Activated CD4-positive, alpha-beta T cell treated with anti-CD3 and anti-CD28 coated beads for 36 hours (primary cell): ENCODE measurements at regions of chr5 and their contacts with region 1.

Region 1: GRCh38 chr5:54969856-54970828 is 15.3 kb downstream of the ESM1 start:
- DNase-seq: no peak
- ATAC-seq: no peak
- H3K4me3 Mint-ChIP-seq: no peak overlapping the region
- H3K27ac Mint-ChIP-seq: no peak overlapping the region
- H3K4me1 Mint-ChIP-seq: no peaks in the 10 kb centered on the region
- H3K27me3 Mint-ChIP-seq: no peaks in the 10 kb centered on the region

Region 2: DNA sequence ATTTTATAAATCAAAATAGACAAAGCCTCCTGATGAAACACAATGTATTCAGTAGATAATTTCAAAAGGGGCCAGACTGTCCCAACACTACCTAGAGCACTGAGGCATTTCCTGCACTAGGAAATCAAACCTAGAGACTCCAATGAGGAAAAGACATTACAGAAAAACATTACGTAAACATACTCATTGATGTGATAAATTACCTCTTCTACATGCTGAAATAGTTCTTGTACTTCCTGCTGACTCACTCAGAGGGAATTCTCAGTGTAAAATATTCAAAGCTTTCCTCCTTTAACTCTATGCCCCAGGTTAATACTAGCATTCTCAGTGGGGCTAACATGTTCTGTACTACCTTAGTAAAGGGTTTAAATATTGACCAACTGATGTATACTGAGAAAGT is 162.7 kb before region 1 on chr5:
- CTCF ChIA-PET with region 1: no interaction called
- POLR2A ChIA-PET with region 1: no interaction called
- intact Hi-C with region 1: no loop called
- DNase-seq: no peak
- ATAC-seq: no peak
- H3K4me3 Mint-ChIP-seq: no peak overlapping the region
- H3K27ac Mint-ChIP-seq: no peak overlapping the region
- H3K4me1 Mint-ChIP-seq: peaks cover 10% of the 10 kb centered on the region
- H3K27me3 Mint-ChIP-seq: peaks cover 2% of the 10 kb centered on the region

Region 3: GRCh38 chr5:54985301-54986268 is 15.4 kb after region 1 on chr5 and contains the start of gene ESM1:
- CTCF ChIA-PET with region 1: interaction called, 4 read pairs
- POLR2A ChIA-PET with region 1: no interaction called
- intact Hi-C with region 1: loop called in 1 of 2 experiments (anchors 1 kb)
- DNase-seq: peak; percentile 9
- ATAC-seq: peak; percentile 60
- H3K4me3 Mint-ChIP-seq: no peak within 1 kb of the TSS
- H3K27ac Mint-ChIP-seq: peak within 1 kb of the TSS; percentile 26
- H3K4me1 Mint-ChIP-seq: peaks cover 38% of the 10 kb centered on the region
- H3K27me3 Mint-ChIP-seq: peaks cover 12% of the 10 kb centered on the region
- total RNA-seq, gene ESM1: not detected